ENCODE measurements at regions of chr3 and their contacts with region 1.

Region 1: DNA sequence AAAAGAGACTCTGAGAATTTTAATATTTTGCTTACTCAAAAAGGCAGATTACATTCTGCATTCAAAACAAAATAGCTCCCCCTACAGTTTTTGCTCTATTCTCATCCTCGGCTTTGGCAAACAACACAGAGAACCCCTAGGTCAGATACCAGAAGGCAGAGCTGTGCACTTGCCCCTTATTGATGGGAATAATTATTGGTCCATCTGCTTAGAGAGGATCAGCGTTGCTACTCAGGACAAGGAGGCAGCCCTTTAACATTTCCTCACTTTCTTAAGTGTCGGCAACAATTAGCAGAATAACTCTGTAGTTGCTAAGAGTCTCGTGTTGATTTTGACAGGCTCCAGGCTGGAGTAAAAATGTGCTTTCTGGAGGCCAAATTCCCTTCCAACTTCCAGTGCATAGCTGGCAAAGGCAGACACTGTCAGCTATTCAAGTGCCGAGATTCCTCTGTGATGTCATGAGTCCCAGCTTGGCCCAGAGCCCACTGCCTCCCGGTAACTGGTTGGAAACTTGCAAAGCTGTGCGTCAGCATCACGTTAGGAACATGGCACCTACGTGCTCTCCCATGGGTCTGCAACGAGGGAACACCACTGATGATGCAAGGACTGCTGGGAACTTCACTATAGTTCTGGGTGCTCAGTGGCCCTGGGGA is 482.7 kb upstream of the ADAMTS9 start:
- H3K4me3 ChIP-seq: no peak overlapping the region
- H3K27ac ChIP-seq: no peak overlapping the region
- H3K4me1 ChIP-seq: no peaks in the 10 kb centered on the region
- CTCF ChIP-seq: no peak

Region 2: DNA sequence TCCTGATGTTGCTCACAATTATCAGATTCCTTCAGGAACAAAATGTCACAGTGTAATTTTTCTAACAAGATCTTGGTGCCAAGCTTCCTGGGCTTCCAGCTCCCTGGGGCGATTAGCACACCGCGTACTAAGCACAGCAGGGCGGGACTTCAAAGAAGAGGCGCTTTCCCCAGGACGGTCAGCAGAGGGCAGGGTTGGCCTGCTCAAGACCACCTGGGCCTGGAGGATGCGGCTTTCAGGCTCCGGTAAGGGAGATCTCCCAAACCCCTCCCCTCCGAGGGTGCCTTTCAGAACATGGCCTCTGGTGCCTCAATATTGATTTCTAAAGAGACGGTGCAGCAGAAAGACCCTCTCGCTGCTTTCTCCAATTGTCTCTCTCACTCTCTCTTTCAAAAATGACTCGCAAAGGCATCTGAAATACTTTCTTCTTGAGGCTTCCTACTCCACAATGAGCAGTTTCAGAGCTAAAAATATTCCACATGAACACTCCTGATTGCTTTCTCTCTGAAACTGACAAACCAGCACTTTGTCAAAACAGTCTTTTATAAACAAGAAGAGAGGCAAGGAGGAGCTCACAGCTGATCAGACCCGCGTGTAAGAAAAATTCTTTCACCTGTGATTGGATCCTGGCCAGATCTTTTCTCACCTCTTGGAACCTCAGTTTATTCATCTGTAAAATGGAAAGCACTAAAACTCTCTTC is 636.7 kb before region 1 on chr3:
- CTCF ChIA-PET with region 1: interaction called, 18 read pairs
- POLR2A ChIA-PET with region 1: interaction called, 4 read pairs
- H3K4me3 ChIP-seq: no peak overlapping the region
- H3K27ac ChIP-seq: no peak overlapping the region
- H3K4me1 ChIP-seq: no peaks in the 10 kb centered on the region
- CTCF ChIP-seq: peak; percentile 77

Region 3: GRCh38 chr3:65060904-65061303 is 109.6 kb before region 1 on chr3:
- CTCF ChIA-PET with region 1: no interaction called
- POLR2A ChIA-PET with region 1: no interaction called
- H3K4me3 ChIP-seq: no peak overlapping the region
- H3K27ac ChIP-seq: no peak overlapping the region
- H3K4me1 ChIP-seq: no peaks in the 10 kb centered on the region
- CTCF ChIP-seq: no peak

Region 4: GRCh38 chr3:65210026-65210814 is 39.7 kb after region 1 on chr3:
- CTCF ChIA-PET with region 1: no interaction called
- POLR2A ChIA-PET with region 1: no interaction called
- H3K4me3 ChIP-seq: no peak overlapping the region
- H3K27ac ChIP-seq: no peak overlapping the region
- H3K4me1 ChIP-seq: no peaks in the 10 kb centered on the region
- CTCF ChIP-seq: no peak